Activated CD8-positive, alpha-beta T cell treated with anti-CD3 and anti-CD28 coated beads, Interleukin-2, amount 10 ng/mL, durations not matched to agents 7 days and 5 days (primary cell): ENCODE measurements at regions of chr19 and their contacts with region 1.

Region 1: DNA sequence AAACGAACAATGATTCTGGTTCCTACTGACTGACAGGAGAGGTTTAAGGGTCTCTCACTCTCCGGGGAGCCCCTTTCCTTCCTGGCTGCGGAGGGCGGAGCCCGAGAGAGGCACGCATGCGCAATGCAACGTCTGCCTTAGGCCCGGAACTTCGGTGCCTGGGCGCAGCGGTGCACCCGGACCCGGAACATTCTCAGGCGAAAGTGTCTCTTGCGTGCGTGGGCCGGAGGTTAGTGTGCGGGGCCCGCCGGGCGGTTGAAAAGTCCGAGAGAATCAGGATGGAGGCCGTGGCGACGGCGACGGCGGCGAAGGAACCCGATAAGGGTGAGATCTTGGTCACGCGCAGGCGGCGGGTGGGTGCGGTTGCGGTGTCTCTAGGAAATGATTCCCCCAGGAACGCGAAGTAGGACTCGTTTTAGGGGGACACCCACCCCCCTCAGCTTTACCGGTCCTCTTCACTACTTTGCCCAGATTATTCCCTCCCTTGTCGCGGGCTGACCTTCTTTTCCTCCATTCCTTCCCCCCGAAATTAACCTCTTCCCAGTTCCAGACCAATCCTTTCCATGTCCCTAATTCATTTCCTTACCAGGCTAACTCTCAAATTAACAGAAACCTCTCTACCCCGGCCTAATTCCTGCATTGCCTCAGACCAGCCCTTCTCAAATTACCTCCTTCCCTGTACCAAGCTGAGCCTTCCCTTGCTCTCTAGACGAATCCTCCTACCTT is at the start of gene CCDC97:
- DNase-seq: peak; percentile 91
- ATAC-seq: peak; percentile 74
- H3K4me3 Mint-ChIP-seq: peak within 1 kb of the TSS; percentile 96
- H3K27ac Mint-ChIP-seq: peak within 1 kb of the TSS; percentile 98
- H3K4me1 Mint-ChIP-seq: peaks cover 65% of the 10 kb centered on the region
- H3K27me3 Mint-ChIP-seq: no peaks in the 10 kb centered on the region
- total RNA-seq, gene CCDC97: 33.5 to 36.1 TPM

Region 2: DNA sequence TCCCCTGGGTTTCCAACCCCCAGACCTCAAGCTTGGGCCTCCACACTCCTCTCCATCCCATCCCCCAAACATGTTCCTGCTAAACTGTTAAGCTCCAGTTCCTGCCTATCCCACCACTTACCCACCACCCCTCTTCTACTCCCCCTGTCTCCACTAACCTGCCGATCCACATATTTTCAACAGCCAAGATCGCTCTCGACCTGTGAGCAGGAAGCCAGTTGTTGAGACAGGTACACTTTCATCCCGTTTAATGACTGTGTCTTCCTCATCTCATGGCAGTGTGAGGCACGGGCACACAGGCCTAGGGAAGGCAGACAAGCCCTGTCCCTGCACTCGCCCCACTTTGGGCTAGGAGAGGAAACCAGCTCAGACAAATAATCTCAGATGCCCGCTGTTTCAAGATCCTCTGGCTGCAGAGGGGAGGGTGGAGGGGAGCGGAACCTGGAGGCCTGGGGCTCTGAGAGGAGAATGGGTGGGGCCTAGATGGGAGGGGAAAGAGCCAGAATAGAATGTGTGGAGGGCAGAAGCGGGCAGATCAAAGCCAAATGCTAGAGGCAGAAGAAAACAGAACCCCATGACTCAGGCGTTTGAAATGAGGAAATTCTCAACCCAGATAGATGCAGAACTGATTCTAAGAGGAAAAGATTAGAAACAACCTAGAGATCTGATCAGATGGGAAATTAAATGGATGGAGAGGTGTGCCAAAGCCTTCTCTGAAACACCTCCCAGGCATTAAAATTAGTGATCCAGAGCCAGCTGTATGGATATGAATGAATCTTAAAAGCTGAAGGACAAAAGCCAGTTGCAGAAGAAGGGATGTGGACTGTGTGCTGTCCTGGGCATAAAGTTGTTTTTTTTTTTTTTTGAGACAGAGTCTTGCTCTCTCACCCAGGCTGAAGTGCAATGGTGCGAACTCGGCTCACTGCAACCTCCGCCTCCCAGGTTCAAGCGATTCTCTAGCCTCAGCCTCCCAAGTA is 134.1 kb before region 1 on chr19:
- CTCF ChIA-PET with region 1: no interaction called
- POLR2A ChIA-PET with region 1: no interaction called
- DNase-seq: peak; percentile 75
- ATAC-seq: peak; percentile 93
- H3K4me3 Mint-ChIP-seq: peak overlapping the region; percentile 6
- H3K27ac Mint-ChIP-seq: peak overlapping the region; percentile 65
- H3K4me1 Mint-ChIP-seq: peaks cover 12% of the 10 kb centered on the region
- H3K27me3 Mint-ChIP-seq: no peaks in the 10 kb centered on the region

Region 3: DNA sequence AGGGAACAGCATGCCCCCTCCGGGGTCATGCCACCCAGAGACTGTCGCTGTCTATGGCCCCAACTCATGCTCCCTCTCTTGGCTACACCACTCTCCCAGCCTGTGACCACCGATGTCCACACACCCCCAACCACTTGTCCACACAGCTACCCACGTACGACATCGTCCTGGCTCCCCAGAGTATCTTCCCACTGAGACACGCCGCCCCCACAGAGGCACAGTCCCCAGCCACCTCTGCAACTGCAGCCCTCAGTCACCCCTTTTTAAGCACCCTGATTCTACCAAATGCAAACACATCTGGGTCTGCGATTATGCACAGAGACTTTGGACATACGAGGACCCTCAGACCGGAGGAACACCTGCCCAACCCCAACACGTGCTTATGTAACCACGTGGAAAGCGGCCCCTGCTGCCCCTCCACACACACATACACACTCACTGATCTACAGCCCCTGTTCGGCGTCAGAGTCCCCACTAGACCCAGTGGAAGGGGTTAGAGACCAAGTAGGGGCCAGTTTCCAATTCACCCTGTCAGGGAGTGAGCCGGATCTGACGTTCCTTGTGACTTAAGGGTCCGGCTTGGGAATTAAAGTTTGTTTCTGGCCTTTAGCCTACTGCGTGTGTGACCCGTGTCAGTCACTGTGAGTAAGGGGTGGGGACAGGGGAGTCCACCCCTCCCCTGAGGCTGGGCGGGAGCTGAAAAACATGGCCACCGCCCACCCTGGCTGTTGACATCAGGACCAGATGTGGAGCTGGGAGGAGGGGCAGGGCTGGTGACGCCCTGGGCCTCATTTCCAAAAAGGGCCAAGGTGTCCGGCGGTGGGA is 103.1 kb before region 1 on chr19:
- CTCF ChIA-PET with region 1: interaction called, 29 read pairs
- POLR2A ChIA-PET with region 1: interaction called, 3 read pairs
- DNase-seq: no peak
- ATAC-seq: no peak
- H3K4me3 Mint-ChIP-seq: no peak overlapping the region
- H3K27ac Mint-ChIP-seq: no peak overlapping the region
- H3K4me1 Mint-ChIP-seq: peaks cover 8% of the 10 kb centered on the region
- H3K27me3 Mint-ChIP-seq: no peaks in the 10 kb centered on the region

Region 4: GRCh38 chr19:41288673-41289505 is 21.3 kb before region 1 on chr19:
- CTCF ChIA-PET with region 1: interaction called, 18 read pairs
- POLR2A ChIA-PET with region 1: interaction called, 3 read pairs
- DNase-seq: no peak
- ATAC-seq: no peak
- H3K4me3 Mint-ChIP-seq: no peak overlapping the region
- H3K27ac Mint-ChIP-seq: peak overlapping the region; percentile 18
- H3K4me1 Mint-ChIP-seq: peaks cover 7% of the 10 kb centered on the region
- H3K27me3 Mint-ChIP-seq: no peaks in the 10 kb centered on the region

Region 5: GRCh38 chr19:41327576-41328156 is 17.5 kb after region 1 on chr19:
- CTCF ChIA-PET with region 1: interaction called, 9 read pairs
- POLR2A ChIA-PET with region 1: interaction called, 12 read pairs
- DNase-seq: peak; percentile 84
- ATAC-seq: peak; percentile 66
- H3K4me3 Mint-ChIP-seq: peak overlapping the region; percentile 64
- H3K27ac Mint-ChIP-seq: peak overlapping the region; percentile 94
- H3K4me1 Mint-ChIP-seq: peaks cover 75% of the 10 kb centered on the region
- H3K27me3 Mint-ChIP-seq: no peaks in the 10 kb centered on the region

Region 6: DNA sequence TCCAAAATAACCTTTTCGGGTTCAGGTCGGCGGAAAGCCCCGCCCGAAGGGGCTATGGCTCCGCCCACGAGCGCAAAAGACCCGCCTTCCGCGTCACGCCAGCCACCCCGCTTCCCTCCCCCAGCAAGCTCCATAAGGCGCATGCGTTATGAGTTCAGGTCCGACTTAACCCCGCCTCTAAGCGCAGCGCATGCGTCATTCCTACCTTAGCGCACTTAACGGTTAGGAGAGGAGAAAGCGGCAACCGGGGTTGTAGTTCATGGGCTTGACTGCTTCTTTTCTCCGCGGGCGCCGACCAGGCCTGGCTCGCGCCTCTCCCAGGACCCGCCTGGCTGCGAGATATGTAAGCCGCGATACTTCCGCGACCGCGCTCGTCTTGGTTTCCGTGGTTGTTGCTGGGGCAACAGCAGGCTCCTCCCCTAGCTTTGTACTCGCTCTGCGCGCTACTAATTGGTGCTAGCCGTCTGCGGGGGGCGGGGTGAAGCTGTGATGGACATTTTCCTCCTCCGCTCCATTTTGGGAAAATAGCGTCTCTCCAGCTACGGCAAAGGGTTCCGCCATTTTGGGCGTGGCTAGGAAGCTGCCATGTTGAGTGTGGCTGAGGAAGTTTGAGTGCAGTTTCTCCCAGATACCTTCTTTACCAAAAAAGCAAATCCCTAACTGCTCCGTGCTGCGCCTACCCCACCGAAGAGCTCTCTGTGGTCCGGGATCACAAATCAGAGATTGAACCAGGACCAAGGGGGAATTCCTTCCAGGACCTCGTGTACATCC is 53.7 kb after region 1 on chr19 and contains the start of gene B9D2:
- CTCF ChIA-PET with region 1: interaction called, 13 read pairs
- POLR2A ChIA-PET with region 1: no interaction called
- DNase-seq: peak; percentile 99
- ATAC-seq: peak; percentile 96
- H3K4me3 Mint-ChIP-seq: peak within 1 kb of the TSS; percentile 93
- H3K27ac Mint-ChIP-seq: peak within 1 kb of the TSS; percentile 99
- H3K4me1 Mint-ChIP-seq: peaks cover 37% of the 10 kb centered on the region
- H3K27me3 Mint-ChIP-seq: no peaks in the 10 kb centered on the region
- total RNA-seq, gene B9D2: 10.6 to 12.8 TPM